ENCODE measurements at regions of chr1 and their contacts with region 1.

Region 1: DNA sequence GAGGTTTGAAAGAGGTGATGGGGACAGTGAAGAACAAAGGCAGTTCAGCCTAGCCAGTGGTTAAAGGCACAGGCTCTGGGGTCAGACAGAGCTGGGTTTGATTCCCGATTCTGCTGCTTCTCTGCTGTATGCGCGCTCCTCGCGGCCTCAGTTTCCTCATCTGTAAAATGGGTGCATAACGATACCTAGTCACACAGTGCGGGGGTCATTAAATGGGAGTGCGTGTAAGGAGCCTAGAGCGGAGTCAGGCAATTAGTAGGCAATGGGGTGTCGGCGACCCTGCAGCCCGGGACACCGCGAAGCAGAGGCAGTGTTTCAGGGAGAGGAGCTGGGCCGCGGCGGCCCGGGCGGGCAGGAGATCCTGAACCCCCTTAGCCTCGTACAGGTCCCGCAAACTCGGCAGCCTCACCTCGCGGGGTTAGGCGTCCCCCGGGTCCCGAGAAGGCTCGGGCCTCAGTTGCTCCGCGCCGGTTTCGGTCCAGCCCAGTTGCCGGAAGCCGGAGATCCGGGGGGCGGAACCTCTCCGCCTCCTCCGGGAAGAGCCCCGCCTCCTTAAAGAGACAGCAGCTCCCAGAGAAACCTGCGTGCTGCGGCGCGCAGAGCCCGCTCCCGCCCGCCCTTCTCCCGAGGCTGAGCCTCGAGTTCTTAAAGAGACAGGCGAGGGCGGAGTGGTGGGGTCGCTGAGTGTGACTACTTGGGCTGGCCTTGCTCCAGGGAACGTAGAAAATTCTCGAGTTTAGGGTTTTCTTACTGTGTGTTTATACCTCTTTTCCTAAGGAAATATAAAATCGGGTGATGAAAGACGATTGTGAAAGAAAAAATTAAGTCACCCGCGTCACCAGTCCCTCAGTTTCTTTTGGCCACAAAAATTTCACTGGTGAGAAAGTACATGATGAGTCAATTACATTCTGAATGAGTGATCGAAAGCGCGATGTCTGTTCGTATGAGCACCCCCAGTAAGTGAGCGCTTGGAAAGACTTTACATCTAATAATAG is at the start of gene YIPF1:
- DNase-seq: peak; percentile 86 to 92 (median 89)
- H3K4me3 ChIP-seq: peak within 1 kb of the TSS; percentile 77
- H3K27ac ChIP-seq: peak within 1 kb of the TSS in 1 of 2 donors; percentile 47
- H3K4me1 ChIP-seq: no peaks in the 10 kb centered on the region
- H3K27me3 ChIP-seq: no peaks in the 10 kb centered on the region
- CTCF ChIP-seq: no peak
- EP300 ChIP-seq: peak; percentile 80
- POLR2A ChIP-seq: peak; percentile 71
- total RNA-seq, gene YIPF1: 11.5 to 20.9 (median 18.3) TPM

Region 2: DNA sequence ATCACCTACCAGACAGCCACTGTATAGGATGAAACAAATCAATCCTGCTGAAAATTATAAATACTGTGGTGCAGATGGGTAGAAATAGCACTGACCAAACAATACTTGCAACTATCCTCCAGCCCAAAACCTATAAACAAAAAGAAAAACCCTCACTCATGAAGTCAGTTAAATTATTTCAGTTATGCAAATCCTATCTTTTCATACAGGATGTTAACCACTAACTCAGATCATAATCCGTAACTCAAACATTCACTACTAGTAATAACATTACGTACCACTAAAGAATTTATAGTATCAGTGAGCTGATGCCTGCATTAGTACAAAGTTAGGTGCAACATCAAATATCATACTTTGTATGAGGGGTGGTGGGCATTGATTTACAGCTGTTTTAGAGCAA is 54.1 kb before region 1 on chr1:
- intact Hi-C with region 1: no loop called
- DNase-seq: no peak
- H3K4me3 ChIP-seq: no peak overlapping the region
- H3K27ac ChIP-seq: no peak overlapping the region
- H3K4me1 ChIP-seq: peaks cover 3% of the 10 kb centered on the region
- H3K27me3 ChIP-seq: no peaks in the 10 kb centered on the region
- CTCF ChIP-seq: no peak
- EP300 ChIP-seq: no peak
- POLR2A ChIP-seq: no peak

Region 3: GRCh38 chr1:53945433-53946251 is 56.0 kb after region 1 on chr1 and contains the start of gene IFT25:
- intact Hi-C with region 1: loop called in 2 of 4 experiments (anchors 5 kb)
- DNase-seq: peak; percentile 96 to 100 (median 99)
- H3K4me3 ChIP-seq: peak within 1 kb of the TSS; percentile 84
- H3K27ac ChIP-seq: peak within 1 kb of the TSS; percentile 88 to 89
- H3K4me1 ChIP-seq: peaks cover 11% of the 10 kb centered on the region
- H3K27me3 ChIP-seq: no peaks in the 10 kb centered on the region
- CTCF ChIP-seq: no peak
- EP300 ChIP-seq: no peak
- POLR2A ChIP-seq: peak; percentile 74
- total RNA-seq, gene IFT25: 24.2 to 39.3 (median 28.5) TPM

Region 4: DNA sequence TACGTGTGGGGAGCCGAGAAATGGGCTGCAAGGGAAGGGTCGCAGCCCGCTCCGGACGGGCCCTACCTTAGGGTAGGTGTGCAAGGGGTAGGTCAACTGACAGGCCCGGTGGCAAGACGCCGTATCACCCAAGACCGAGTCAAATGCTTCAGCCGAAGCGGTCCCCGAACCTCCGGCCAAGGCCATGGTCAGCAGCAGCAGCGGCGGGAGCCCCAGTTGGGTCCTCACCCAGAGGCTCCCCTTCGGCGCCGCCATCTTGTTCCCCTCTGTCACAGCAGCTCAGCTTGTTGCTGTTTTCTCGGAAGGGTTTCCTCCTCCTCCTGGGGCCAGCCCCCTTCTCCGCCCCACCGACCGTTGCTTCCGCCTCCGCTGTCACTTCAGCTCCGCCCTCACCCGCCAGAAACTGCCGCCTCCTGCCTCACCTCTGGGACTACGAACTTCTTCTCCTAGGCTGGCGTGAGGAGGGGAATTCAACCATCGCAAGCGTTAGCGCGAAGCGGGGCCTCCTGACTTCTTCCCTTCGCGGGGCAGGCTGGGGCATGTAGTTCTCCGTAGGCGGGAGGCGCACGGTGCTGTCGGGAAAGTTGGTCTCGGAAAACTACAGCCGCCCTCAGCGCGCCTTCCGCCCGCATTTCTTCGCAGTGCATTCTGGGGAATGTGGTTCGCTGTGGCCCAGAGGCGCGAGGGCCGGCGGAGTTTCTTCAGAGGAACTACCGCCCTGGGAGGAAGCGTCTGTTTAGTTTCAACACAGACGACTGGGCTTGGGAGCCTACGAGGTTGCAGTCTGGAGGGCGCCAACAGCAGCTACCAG is 163.5 kb after region 1 on chr1 and contains the starts of genes TCEANC2 and TMEM59:
- intact Hi-C with region 1: loop called in 1 of 4 experiments (anchors 5 kb)
- DNase-seq: peak; percentile 94 to 97 (median 95)
- H3K4me3 ChIP-seq: peak within 1 kb of the TSS; percentile 77
- H3K27ac ChIP-seq: peak within 1 kb of the TSS; percentile 82 to 84
- H3K4me1 ChIP-seq: peaks cover 4% of the 10 kb centered on the region
- H3K27me3 ChIP-seq: no peaks in the 10 kb centered on the region
- CTCF ChIP-seq: peak in 1 of 3 donors; percentile 5
- EP300 ChIP-seq: peak; percentile 18
- POLR2A ChIP-seq: peak; percentile 73
- total RNA-seq, gene TCEANC2: 1.8 to 4.7 (median 3.0) TPM
- total RNA-seq, gene TMEM59: 165 to 337 (median 268) TPM